Activated CD4-positive, alpha-beta memory T cell treated with anti-CD3 and anti-CD28 coated beads, Interleukin-2, amount 10 ng/mL, durations not matched to agents 7 days and 5 days (primary cell): ENCODE measurements at regions of chr10 and their contacts with region 1.

Region 1: DNA sequence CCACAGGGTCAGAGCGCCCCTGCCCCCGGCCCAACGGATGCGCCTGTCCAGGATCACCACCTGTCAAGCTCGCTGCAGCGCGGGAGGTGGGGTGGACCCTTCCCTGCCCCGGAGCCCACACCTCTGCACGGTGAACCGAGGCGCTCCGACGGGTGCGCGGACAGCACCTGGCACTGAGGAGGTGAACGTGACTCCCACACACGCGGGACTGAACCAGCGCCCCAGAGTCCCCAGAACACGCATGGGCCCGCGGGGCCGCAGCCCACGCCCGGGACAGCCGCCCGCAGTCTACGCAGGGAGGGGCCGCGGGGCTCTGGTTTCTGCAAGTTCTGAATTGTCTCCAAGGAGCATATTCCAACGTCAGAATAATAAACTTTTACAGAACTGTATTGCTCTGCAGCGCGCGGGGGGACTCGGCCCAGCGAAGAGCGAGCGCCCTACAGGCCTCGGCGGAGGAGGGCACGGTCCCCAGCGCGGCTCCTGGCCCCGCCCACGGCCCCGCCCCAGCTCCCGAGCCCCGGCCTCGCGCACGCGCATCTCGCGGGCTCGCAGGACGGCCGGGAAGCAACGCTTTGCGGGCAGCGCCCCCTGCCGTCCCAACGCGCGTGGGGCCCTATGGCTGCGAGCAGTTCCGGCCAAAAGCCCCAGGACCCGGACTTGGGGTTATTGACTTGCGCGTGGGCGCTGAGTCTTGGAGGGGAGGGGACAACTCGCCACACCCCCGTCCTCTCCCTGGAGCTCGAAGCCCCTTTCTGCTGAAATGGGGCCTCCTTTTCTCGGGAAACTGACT is 29.7 kb downstream of the OAT start:
- DNase-seq: peak; percentile 93
- H3K4me3 Mint-ChIP-seq: no peak overlapping the region
- H3K27ac Mint-ChIP-seq: no peak overlapping the region
- H3K4me1 Mint-ChIP-seq: peaks cover 1% of the 10 kb centered on the region
- H3K27me3 Mint-ChIP-seq: no peaks in the 10 kb centered on the region

Region 2: DNA sequence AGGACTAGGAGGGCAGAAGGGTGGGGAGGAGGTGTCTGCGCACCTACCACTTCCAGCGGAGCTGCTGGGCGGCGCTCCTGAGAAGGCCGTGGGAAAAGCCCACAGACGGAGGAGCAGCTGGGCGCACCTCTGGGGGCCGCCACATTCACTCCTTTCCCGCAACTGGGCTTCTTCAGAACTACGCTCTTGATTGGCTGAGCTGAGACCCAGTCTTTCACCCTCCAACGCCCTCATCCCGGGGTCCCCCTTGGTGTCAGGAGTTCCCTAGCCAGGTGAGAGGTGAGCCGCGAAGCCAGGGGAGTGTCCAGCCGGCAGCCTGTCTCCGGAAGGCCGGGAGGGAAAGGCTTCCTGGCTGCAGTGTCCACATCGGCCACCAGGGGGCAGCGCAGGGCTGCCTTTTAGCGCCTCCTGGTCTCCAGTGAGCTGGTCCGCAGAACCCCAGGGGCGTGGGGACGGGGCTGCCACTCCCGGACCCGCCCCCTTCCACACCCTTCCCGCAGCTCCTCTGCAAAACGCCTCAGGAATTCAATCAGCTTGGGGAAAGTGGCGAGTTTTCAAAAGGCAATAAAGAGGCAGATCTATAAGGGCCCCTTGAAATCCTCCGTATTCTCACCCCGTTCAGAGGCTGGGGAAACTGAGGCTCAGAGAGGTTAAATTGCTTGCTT is 394.5 kb before region 1 on chr10:
- CTCF ChIA-PET with region 1: interaction called, 164 read pairs
- POLR2A ChIA-PET with region 1: interaction called, 5 read pairs
- DNase-seq: peak; percentile 80
- H3K4me3 Mint-ChIP-seq: no peak overlapping the region
- H3K27ac Mint-ChIP-seq: no peak overlapping the region
- H3K4me1 Mint-ChIP-seq: no peaks in the 10 kb centered on the region
- H3K27me3 Mint-ChIP-seq: peaks cover 51% of the 10 kb centered on the region

Region 3: GRCh38 chr10:124249812-124250432 is 139.1 kb before region 1 on chr10:
- CTCF ChIA-PET with region 1: interaction called, 11 read pairs
- POLR2A ChIA-PET with region 1: no interaction called
- DNase-seq: no peak
- H3K4me3 Mint-ChIP-seq: no peak overlapping the region
- H3K27ac Mint-ChIP-seq: no peak overlapping the region
- H3K4me1 Mint-ChIP-seq: no peaks in the 10 kb centered on the region
- H3K27me3 Mint-ChIP-seq: peaks cover 2% of the 10 kb centered on the region

Region 4: GRCh38 chr10:124354411-124355382 is 34.3 kb before region 1 on chr10:
- CTCF ChIA-PET with region 1: interaction called, 11 read pairs
- POLR2A ChIA-PET with region 1: no interaction called
- DNase-seq: peak; percentile 31
- H3K4me3 Mint-ChIP-seq: peak overlapping the region; percentile 72
- H3K27ac Mint-ChIP-seq: peak overlapping the region; percentile 54
- H3K4me1 Mint-ChIP-seq: peaks cover 11% of the 10 kb centered on the region
- H3K27me3 Mint-ChIP-seq: peaks cover 7% of the 10 kb centered on the region

Region 5: GRCh38 chr10:124403548-124403947 is 14.5 kb after region 1 on chr10:
- CTCF ChIA-PET with region 1: interaction called, 38 read pairs
- POLR2A ChIA-PET with region 1: no interaction called
- DNase-seq: peak; percentile 36
- H3K4me3 Mint-ChIP-seq: no peak overlapping the region
- H3K27ac Mint-ChIP-seq: peak overlapping the region; percentile 55
- H3K4me1 Mint-ChIP-seq: peaks cover 9% of the 10 kb centered on the region
- H3K27me3 Mint-ChIP-seq: no peaks in the 10 kb centered on the region

Region 6: DNA sequence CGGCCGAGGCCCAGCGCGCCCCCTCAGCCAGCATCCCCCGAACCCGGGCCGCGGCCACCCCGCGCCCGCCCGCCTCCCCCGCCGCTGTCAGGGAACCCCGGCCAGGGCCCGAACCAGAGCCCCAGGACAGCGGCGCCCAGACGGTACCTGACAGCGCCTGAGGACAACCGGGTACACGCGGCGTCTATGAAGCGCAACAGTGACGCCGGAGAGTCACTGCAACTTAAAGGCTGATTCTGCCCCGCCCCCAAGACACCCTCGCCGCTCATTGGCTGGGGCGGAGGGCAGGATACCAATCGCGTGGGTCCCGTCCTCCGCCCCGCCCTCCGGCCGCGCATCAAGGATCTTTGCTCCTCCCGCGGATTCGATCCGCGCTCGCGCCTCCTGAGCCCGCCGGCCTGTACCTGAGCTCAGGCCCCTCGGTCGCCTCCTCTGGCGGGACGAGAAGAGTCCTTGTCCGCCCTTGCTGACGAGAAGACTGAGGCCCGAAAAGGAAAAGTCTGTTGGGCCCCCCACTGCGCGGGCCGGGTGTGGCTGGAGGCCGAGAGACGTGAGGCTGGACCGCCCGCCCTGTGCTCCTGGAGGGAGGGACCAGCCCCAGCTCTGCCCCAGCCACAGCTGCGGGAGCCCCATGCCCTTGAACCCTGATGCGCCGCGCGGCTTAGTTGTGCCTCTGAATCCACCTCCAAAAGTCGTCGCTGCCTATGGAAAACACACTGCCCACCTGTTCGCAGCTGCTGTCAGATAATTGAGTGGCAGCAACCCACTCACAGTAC is 29.9 kb after region 1 on chr10 and contains the start of gene OAT:
- CTCF ChIA-PET with region 1: interaction called, 16 read pairs
- POLR2A ChIA-PET with region 1: no interaction called
- DNase-seq: peak; percentile 97
- H3K4me3 Mint-ChIP-seq: peak within 1 kb of the TSS; percentile 77
- H3K27ac Mint-ChIP-seq: peak within 1 kb of the TSS; percentile 49
- H3K4me1 Mint-ChIP-seq: peaks cover 12% of the 10 kb centered on the region
- H3K27me3 Mint-ChIP-seq: peaks cover 8% of the 10 kb centered on the region
- total RNA-seq, gene OAT: 20.7 to 21.3 TPM

Region 7: GRCh38 chr10:124470544-124471434 is 81.8 kb after region 1 on chr10:
- CTCF ChIA-PET with region 1: no interaction called
- POLR2A ChIA-PET with region 1: no interaction called
- DNase-seq: no peak
- H3K4me3 Mint-ChIP-seq: no peak overlapping the region
- H3K27ac Mint-ChIP-seq: no peak overlapping the region
- H3K4me1 Mint-ChIP-seq: peaks cover 5% of the 10 kb centered on the region
- H3K27me3 Mint-ChIP-seq: no peaks in the 10 kb centered on the region